WTC11 (cell line): ENCODE measurements at regions of chr2 and their contacts with region 1.

Region 1: GRCh38 chr2:84741296-84741765 is 139.6 kb downstream of the TRABD2A start:
- DNase-seq: peak; percentile 65
- ATAC-seq: peak; percentile 100
- H3K4me3 Mint-ChIP-seq: no peak overlapping the region
- H3K27ac Mint-ChIP-seq: no peak overlapping the region
- H3K4me1 Mint-ChIP-seq: peaks cover 4% of the 10 kb centered on the region; the same call in 1 of the 2 replicates
- H3K27me3 Mint-ChIP-seq: peaks cover 11% of the 10 kb centered on the region
- CTCF ChIP-seq: 0 out of 2 replicates have a peak, but pooled peaks have one; percentile 33

Region 2: GRCh38 chr2:84716564-84716963 is 24.8 kb before region 1 on chr2:
- CTCF ChIA-PET with region 1: interaction called, 16 read pairs
- POLR2A ChIA-PET with region 1: no interaction called
- DNase-seq: no peak
- ATAC-seq: no peak
- H3K4me3 Mint-ChIP-seq: no peak overlapping the region
- H3K27ac Mint-ChIP-seq: no peak overlapping the region
- H3K4me1 Mint-ChIP-seq: no peaks in the 10 kb centered on the region
- H3K27me3 Mint-ChIP-seq: no peaks in the 10 kb centered on the region
- CTCF ChIP-seq: no peak

Region 3: GRCh38 chr2:84881581-84882414 is 140.5 kb after region 1 on chr2:
- CTCF ChIA-PET with region 1: interaction called, 15 read pairs
- POLR2A ChIA-PET with region 1: no interaction called
- DNase-seq: peak; percentile 85
- ATAC-seq: peak; percentile 63
- H3K4me3 Mint-ChIP-seq: peak overlapping the region; percentile 72
- H3K27ac Mint-ChIP-seq: no peak overlapping the region
- H3K4me1 Mint-ChIP-seq: peaks cover 10% of the 10 kb centered on the region
- H3K27me3 Mint-ChIP-seq: peaks cover 88% of the 10 kb centered on the region
- CTCF ChIP-seq: peak; percentile 37; the same call in 1 of the 2 replicates